AG04449 (cell line): ENCODE measurements at regions of chr3 and their contacts with region 1.

Region 1: DNA sequence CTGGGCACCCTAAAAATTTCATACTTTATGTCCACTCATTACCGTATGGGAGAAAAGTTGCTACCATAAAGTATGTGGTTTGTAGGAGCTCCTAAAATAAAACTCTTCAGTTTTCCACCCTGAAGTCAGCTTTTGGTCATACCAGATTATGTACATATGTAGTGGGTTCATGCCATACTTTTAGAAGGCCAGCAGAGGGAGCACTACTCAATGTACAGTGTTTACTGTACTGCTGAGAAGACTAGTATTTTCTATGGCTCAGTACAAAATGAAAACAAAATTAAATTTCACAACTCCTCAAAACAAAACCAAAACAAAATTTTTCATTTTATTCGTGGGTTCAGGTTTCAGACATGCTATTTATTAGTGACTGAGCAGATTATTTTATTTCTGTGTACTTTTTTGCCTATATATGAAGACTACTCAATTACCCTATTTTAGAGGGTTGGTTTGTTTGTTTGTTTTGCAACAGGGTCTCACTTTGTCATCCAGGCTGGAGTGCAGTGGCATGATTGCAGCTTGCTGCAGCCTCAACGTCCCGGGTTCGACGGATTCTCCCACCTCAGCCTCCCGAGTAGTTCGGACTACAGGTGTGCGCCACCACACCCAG is 24.3 kb downstream of the NXPE3 start:
- DNase-seq: no peak
- H3K4me3 ChIP-seq: no peak overlapping the region
- CTCF ChIP-seq: peak; percentile 75

Region 2: GRCh38 chr3:101784855-101785613 is 18.2 kb before region 1 on chr3:
- CTCF ChIA-PET with region 1: interaction called, 46 read pairs
- POLR2A ChIA-PET with region 1: no interaction called
- DNase-seq: no peak
- H3K4me3 ChIP-seq: no peak overlapping the region
- CTCF ChIP-seq: no peak

Region 3: GRCh38 chr3:101791778-101792177 is 11.5 kb before region 1 on chr3:
- CTCF ChIA-PET with region 1: interaction called, 56 read pairs
- POLR2A ChIA-PET with region 1: no interaction called
- DNase-seq: no peak
- H3K4me3 ChIP-seq: no peak overlapping the region
- CTCF ChIP-seq: no peak

Region 4: DNA sequence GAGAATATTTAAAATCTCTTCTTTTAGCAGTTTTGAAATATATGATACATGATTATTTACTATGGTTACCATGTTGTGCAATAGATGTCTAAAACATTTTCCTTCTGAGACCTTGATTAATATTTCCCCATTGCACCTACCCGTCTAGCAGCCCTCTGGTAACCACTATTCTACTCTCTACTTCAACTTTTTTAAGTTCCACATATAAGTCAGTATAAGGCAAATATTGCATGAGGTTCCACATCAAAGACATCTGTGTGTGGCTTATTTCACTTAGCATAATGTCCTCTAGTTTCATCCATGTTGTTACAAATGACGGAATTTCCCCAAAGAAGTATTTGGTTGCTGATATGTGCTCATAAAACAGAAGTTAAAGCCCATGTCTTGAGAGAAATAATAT is 16.5 kb after region 1 on chr3:
- CTCF ChIA-PET with region 1: interaction called, 66 read pairs
- POLR2A ChIA-PET with region 1: no interaction called
- DNase-seq: no peak
- H3K4me3 ChIP-seq: no peak overlapping the region
- CTCF ChIP-seq: no peak

Region 5: GRCh38 chr3:101827211-101828174 is 24.2 kb after region 1 on chr3:
- CTCF ChIA-PET with region 1: interaction called, 14 read pairs
- POLR2A ChIA-PET with region 1: no interaction called
- DNase-seq: no peak
- H3K4me3 ChIP-seq: peak overlapping the region; percentile 61
- CTCF ChIP-seq: no peak

Region 6: DNA sequence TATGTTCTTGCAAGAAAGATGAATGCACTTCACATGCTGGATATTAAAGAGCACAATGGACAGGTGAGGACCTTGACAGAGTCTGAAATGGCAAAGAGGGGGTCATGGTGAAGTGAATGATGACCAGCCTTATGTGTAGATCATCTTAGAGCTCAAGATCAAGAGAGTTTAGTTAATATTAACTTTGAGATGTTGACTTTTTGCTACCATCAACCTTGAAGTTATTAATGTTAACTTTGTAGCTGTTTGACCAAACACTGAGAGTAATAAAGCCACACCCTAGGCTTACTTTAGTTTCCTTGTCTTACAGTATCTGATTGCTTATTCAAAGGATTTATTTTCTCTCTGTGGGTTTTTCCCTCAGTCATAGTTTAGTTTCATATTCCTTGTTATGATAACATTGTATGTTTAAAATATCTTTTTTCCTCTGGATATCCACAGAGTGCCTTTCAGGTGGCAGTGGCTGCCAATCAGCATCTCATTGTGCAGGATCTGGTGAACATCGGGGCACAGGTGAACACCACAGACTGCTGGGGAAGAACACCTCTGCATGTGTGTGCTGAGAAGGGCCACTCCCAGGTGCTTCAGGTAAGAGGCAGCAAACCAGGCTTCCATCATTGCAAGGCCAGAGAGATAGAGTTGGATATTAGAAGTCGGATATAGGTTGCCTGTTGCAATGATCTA is 51.5 kb after region 1 on chr3:
- CTCF ChIA-PET with region 1: interaction called, 10 read pairs
- POLR2A ChIA-PET with region 1: interaction called, 11 read pairs
- DNase-seq: no peak
- H3K4me3 ChIP-seq: no peak overlapping the region
- CTCF ChIP-seq: no peak

Region 7: DNA sequence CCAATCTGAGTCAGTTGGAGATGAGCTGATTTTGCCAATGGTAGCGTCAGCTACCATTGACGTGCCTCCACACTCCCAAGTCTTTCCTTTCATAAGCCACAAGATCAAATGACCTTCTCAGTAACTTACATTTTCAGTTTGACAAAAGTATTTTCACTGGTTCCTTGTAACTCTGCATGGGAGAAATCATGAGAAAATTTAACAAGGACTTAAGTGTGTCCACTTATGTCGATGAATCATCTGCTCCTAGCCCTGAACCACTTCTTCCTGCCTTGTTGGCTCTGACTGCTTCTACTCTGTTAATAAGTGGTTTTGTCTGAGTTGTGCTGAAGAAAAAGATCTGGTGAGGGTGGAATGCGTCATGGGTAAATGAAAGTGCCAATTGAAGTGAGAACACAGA is 147.2 kb after region 1 on chr3:
- CTCF ChIA-PET with region 1: no interaction called
- POLR2A ChIA-PET with region 1: no interaction called
- DNase-seq: peak; percentile 86
- H3K4me3 ChIP-seq: no peak overlapping the region
- CTCF ChIP-seq: no peak

Region 8: GRCh38 chr3:102129760-102130608 is 326.7 kb after region 1 on chr3:
- CTCF ChIA-PET with region 1: no interaction called
- POLR2A ChIA-PET with region 1: no interaction called
- DNase-seq: no peak
- H3K4me3 ChIP-seq: no peak overlapping the region
- CTCF ChIP-seq: no peak

Region 9: DNA sequence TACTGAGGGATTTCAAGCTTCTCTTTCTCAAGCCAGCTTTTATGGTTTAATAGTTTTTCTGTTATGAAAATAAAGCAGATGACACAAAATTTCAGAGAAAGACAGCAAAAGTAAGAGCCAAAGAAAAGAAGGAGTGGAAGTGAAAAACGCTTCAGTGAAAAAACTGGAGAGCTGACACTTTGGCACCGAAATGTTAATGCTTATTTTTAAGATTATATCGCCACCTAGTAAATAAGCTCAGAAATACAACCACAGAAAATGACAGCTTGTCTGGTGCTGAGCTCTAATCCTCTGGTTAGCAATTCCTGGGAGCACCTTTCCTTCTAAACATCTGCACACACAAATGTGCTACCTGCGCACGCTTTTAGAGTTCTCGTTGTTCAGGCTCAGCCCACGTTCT is 733.2 kb after region 1 on chr3:
- CTCF ChIA-PET with region 1: interaction called, 18 read pairs
- POLR2A ChIA-PET with region 1: no interaction called
- DNase-seq: no peak
- H3K4me3 ChIP-seq: no peak overlapping the region
- CTCF ChIP-seq: peak; percentile 19